ENCODE measurements at regions of chr12 and their contacts with region 1.

Region 1: GRCh38 chr12:21438643-21439042 is 1.2 kb downstream of the PYROXD1 start:
- DNase-seq: no peak
- H3K4me3 ChIP-seq: peak overlapping the region in 53 of 59 donors; percentile 57 to 90 (median 78)
- H3K27ac ChIP-seq: peak overlapping the region in 47 of 59 donors; percentile 73 to 96 (median 89)
- H3K27me3 ChIP-seq: no peaks in the 10 kb centered on the region
- CTCF ChIP-seq: no peak

Region 2: DNA sequence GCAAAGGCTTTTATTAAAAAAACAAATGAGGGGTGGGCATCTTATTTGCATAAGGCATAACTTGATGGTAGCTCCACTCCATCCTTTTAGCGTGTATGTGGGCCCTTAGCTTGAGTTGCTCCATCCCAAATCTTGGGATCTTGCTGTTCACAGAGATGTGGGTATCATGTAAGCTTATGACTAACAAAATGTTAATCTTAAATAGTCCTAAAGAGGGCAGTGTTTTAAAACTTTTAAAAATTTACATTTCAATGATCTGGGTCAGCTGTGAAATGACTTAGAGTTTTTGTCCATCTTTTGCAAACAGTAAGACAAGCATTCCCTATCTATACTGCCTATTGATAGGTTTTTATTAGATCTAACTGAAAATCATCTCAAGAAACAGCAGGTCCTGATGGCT is 190.0 kb before region 1 on chr12:
- intact Hi-C with region 1: loop called (anchors 5 kb)
- DNase-seq: no peak
- H3K4me3 ChIP-seq: no peak overlapping the region
- H3K27ac ChIP-seq: no peak overlapping the region
- H3K27me3 ChIP-seq: no peaks in the 10 kb centered on the region
- CTCF ChIP-seq: peak in 52 of 56 donors; percentile 11 to 69 (median 46)

Region 3: GRCh38 chr12:21296751-21297406 is 141.8 kb before region 1 on chr12:
- intact Hi-C with region 1: loop called in 1 of 2 experiments (anchors 2 kb)
- DNase-seq: no peak
- H3K4me3 ChIP-seq: no peak overlapping the region
- H3K27ac ChIP-seq: peak overlapping the region in 40 of 59 donors; percentile 2 to 75 (median 44)
- H3K27me3 ChIP-seq: no peaks in the 10 kb centered on the region
- CTCF ChIP-seq: peak; percentile 53 to 86 (median 74)

Region 4: GRCh38 chr12:21308785-21309184 is 129.9 kb before region 1 on chr12:
- intact Hi-C with region 1: loop called in 1 of 2 experiments (anchors 5 kb)
- DNase-seq: no peak
- H3K4me3 ChIP-seq: no peak overlapping the region
- H3K27ac ChIP-seq: peak overlapping the region in 46 of 59 donors; percentile 2 to 76 (median 46)
- H3K27me3 ChIP-seq: no peaks in the 10 kb centered on the region
- CTCF ChIP-seq: peak in 37 of 56 donors; percentile 10 to 66 (median 37)

Region 5: DNA sequence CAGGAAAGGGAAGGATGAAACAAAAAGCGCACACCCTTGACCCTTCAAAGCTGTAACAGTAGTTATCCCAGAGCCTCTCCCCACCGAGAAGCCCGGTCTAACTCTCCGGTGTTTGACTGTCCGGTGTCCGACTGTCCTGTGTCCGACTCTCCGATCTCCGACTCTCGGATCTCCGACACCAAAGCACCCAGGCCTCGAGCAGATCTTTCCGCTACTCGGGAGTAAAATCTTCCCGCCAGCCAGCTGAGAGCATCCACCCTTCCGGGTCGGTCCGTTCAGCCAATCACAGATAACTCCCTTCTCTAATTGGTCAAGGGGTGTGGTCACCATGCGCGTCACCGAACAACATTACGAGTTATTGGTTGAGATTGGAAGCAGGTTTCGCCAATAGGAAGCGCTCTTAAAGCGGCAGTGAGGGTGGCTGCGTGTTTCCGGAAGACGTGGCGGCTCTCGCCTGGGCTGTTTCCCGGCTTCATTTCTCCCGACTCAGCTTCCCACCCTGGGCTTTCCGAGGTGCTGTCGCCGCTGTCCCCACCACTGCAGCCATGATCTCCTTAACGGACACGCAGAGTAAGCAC is 62.8 kb after region 1 on chr12 and contains the starts of genes GOLT1B and RECQL:
- intact Hi-C with region 1: loop called in 1 of 2 experiments (anchors 5 kb)
- DNase-seq: peak; percentile 68 to 97 (median 94)
- H3K4me3 ChIP-seq: peak within 1 kb of the TSS; percentile 67 to 100 (median 96)
- H3K27ac ChIP-seq: peak within 1 kb of the TSS in 55 of 59 donors; percentile 3 to 90 (median 72)
- H3K27me3 ChIP-seq: no peaks in the 10 kb centered on the region
- CTCF ChIP-seq: peak in 16 of 56 donors; percentile 5 to 42 (median 19)
- total RNA-seq, gene GOLT1B: 21.3 to 60.3 (median 35.8) TPM
- total RNA-seq, gene RECQL: 7.6 to 21.9 (median 13.8) TPM